Activated naive CD4-positive, alpha-beta T cell treated with anti-CD3 and anti-CD28 coated beads, Interleukin-2, amount 10 ng/mL, durations not matched to agents 7 days and 5 days (primary cell): ENCODE measurements at regions of chr21 and their contacts with region 1.

Region 1: GRCh38 chr21:41121785-41122421 is 46.1 kb upstream of the BACE2 start:
- DNase-seq: peak; percentile 80
- H3K4me3 Mint-ChIP-seq: no peak overlapping the region
- H3K27ac Mint-ChIP-seq: no peak overlapping the region
- H3K4me1 Mint-ChIP-seq: no peaks in the 10 kb centered on the region
- H3K27me3 Mint-ChIP-seq: peaks cover 9% of the 10 kb centered on the region

Region 2: DNA sequence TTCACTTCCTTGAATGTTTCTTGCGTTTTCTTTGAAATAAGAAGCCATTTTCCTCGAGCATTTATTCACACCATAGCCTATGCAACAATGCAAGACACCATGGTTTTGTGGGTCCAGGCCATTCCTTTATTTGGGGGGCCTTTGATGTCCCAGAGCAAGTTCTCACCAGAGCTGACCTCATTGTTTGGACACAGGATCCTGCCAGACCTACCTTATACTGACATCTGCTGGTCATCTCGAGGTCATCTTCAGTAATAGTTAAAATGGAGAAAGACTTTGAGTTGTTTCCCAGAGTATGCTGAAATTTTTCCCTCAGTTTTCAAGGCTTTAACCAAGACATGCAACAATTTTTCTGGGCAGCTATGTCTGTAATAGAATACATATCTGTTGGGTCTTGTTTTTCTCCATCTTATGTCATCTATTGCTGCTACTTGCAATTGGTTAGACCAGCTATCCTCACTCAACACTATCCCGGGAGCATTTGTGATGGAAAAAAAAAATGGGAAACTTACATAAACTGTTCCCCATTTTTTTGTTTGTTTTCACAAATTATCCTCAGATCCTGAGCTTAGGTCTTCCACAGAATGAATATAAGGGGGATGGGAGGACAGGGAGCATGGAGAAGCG is 12.1 kb after region 1 on chr21:
- CTCF ChIA-PET with region 1: interaction called, 20 read pairs
- DNase-seq: no peak
- H3K4me3 Mint-ChIP-seq: no peak overlapping the region
- H3K27ac Mint-ChIP-seq: no peak overlapping the region
- H3K4me1 Mint-ChIP-seq: no peaks in the 10 kb centered on the region
- H3K27me3 Mint-ChIP-seq: peaks cover 13% of the 10 kb centered on the region

Region 3: GRCh38 chr21:41304068-41304720 is 182.3 kb after region 1 on chr21:
- CTCF ChIA-PET with region 1: no interaction called
- DNase-seq: no peak
- H3K4me3 Mint-ChIP-seq: no peak overlapping the region
- H3K27ac Mint-ChIP-seq: no peak overlapping the region
- H3K4me1 Mint-ChIP-seq: no peaks in the 10 kb centered on the region
- H3K27me3 Mint-ChIP-seq: peaks cover 21% of the 10 kb centered on the region